Dorsolateral prefrontal cortex (tissue), 120 donors: ENCODE measurements at regions of chr1 and their contacts with region 1.

Region 1: GRCh38 chr1:28736450-28737306 is at the start of gene YTHDF2:
- DNase-seq: peak; percentile 91 to 96 (median 94)
- H3K4me3 ChIP-seq: peak within 1 kb of the TSS; percentile 68 to 100 (median 95)
- H3K27ac ChIP-seq: peak within 1 kb of the TSS; percentile 65 to 97 (median 92)
- H3K27me3 ChIP-seq: no peaks in the 10 kb centered on the region
- CTCF ChIP-seq: peak; percentile 88 to 100 (median 98)
- total RNA-seq, gene YTHDF2: 23.5 to 67.2 (median 47.9) TPM

Region 2: DNA sequence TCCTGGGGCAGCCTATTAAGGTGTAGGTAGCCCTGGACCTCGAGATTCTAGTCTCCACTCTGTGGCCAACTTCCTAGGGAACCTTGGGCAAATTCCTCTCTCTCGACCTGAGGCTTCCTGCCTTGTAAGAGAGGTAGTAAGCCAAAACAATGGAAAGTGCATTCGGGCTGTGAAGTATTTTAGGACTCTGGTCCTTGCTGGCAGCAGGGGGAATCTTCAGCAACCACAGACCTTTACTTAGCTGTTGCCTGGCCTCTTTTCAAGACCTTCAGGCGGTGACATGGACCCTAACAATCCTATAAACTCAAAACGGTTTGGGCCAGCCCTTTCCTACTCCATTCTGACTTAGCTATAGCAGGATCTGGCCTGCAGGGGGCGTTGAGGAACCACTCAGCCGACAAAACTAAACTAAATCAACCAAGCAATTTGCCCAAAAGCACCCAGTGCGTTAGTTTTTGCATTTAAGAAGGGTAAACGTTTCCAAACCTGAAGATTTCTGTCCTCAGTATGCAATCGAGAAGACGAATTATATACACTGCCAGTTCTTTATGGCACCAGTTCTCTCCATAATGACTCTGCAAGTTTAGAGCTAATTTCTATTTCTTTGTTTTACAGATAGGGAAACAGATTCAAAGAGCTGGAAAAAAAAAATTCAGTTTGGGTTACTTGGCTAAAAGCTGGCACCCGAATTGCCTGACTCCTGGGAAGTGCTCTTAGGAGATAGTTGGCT is 488.2 kb before region 1 on chr1:
- intact Hi-C with region 1: loop called in 1 of 2 experiments (anchors 5 kb)
- DNase-seq: peak; percentile 69 to 89 (median 78)
- H3K4me3 ChIP-seq: peak overlapping the region in 51 of 59 donors; percentile 7 to 82 (median 33)
- H3K27ac ChIP-seq: peak overlapping the region; percentile 6 to 96 (median 85)
- H3K27me3 ChIP-seq: no peaks in the 10 kb centered on the region
- CTCF ChIP-seq: peak; percentile 83 to 97 (median 94)

Region 3: GRCh38 chr1:28648474-28649198 is 88.0 kb before region 1 on chr1 and contains the start of gene RNU11:
- intact Hi-C with region 1: loop called (anchors 1 to 2 kb)
- DNase-seq: peak; percentile 57 to 91 (median 86)
- H3K4me3 ChIP-seq: peak within 1 kb of the TSS; percentile 20 to 70 (median 57)
- H3K27ac ChIP-seq: peak within 1 kb of the TSS; percentile 54 to 100 (median 97)
- H3K27me3 ChIP-seq: no peaks in the 10 kb centered on the region
- CTCF ChIP-seq: peak in 16 of 56 donors; percentile 2 to 32 (median 12)
- total RNA-seq, gene RNU11: not detected

Region 4: DNA sequence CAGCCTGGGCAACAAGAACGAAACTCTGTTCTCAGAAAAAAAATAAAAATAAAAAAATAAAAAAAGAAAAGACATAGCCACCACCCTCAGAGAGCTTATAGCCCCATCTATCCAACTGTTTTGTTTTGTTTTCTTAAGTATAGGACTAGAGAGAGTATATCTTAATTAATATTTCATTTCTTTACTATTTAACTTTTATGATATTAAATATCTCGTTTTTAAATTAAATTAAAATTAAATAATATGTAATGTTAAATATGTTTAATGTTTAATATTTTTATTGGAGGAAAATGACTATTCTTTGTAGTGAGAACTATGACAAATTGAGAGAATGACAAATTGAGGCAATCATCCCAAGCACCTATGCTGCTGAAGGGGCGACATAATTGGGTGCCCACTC is 33.0 kb before region 1 on chr1:
- intact Hi-C with region 1: no loop called
- DNase-seq: no peak
- H3K4me3 ChIP-seq: no peak overlapping the region
- H3K27ac ChIP-seq: no peak overlapping the region
- H3K27me3 ChIP-seq: no peaks in the 10 kb centered on the region
- CTCF ChIP-seq: no peak

Region 5: DNA sequence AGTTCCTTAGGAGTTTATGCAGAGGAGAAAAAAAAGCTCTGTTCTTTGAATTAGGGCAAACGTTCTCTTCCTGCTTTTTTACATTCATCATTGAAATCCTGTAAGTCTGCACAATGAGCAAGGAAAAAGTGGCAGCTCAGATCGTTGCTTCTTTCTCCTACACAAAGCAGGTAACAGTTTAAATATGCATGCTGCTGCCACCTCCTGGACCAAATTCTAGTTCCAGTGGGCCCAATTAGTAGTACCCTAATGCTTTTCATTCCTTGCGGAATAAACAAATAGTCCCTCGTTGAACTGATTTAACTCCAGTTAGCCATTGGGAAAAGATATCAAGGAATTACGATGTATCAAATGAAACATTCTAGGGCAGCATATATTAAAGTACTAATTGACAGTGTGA is 20.2 kb after region 1 on chr1:
- intact Hi-C with region 1: loop called in 1 of 2 experiments (anchors 2 kb)
- DNase-seq: peak in 2 of 10 donors; percentile 20 to 24
- H3K4me3 ChIP-seq: peak overlapping the region in 9 of 59 donors; percentile 2 to 20 (median 8)
- H3K27ac ChIP-seq: peak overlapping the region in 2 of 59 donors; percentile 4 to 15
- H3K27me3 ChIP-seq: no peaks in the 10 kb centered on the region
- CTCF ChIP-seq: peak in 34 of 56 donors; percentile 13 to 48 (median 29)

Region 6: GRCh38 chr1:30707412-30708360 is 1971.0 kb after region 1 on chr1:
- intact Hi-C with region 1: loop called in 1 of 2 experiments (anchors 5 kb)
- DNase-seq: peak; percentile 69 to 91 (median 84)
- H3K4me3 ChIP-seq: no peak overlapping the region
- H3K27ac ChIP-seq: peak overlapping the region in 1 of 59 donors; percentile 44
- H3K27me3 ChIP-seq: no peaks in the 10 kb centered on the region
- CTCF ChIP-seq: peak; percentile 38 to 97 (median 85)